ENCODE measurements at regions of chr13 and their contacts with region 1.

Region 1: DNA sequence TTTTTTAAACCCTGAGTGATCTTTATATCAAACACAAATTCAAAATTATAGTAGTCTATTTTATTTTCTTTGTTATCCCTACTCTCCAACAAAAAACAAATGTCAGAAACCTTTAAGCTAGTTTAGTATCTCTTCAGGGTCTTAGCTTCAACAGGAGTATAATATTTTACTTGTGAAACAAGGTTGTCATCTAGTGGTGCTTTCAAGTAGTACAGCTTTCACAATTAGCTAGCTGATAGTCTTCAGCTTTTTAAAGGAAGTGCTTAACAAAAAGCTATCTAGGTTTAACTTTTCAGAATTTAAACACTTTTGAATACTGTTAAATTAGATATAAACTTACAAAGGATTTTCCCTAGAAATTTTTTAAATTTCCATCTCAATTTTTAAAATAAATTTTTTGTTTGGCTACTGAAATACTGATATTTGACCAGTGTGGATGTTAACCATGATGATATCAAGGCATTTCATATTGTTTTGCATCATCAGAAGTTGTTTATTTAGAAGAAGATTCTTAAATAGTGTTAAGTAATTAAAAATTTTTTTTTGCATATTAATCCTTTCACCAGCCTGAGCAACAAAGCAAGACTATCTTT is 34.2 kb downstream of the TDRD3 start:
- DNase-seq: no peak
- H3K4me3 ChIP-seq: no peak overlapping the region
- H3K27ac ChIP-seq: no peak overlapping the region
- H3K4me1 ChIP-seq: peaks cover 0 to 36% (median 6%) of the 10 kb centered on the region in 6 donors
- H3K27me3 ChIP-seq: no peaks in the 10 kb centered on the region
- CTCF ChIP-seq: peak; percentile 61 to 90 (median 80)
- POLR2A ChIP-seq: no peak

Region 2: DNA sequence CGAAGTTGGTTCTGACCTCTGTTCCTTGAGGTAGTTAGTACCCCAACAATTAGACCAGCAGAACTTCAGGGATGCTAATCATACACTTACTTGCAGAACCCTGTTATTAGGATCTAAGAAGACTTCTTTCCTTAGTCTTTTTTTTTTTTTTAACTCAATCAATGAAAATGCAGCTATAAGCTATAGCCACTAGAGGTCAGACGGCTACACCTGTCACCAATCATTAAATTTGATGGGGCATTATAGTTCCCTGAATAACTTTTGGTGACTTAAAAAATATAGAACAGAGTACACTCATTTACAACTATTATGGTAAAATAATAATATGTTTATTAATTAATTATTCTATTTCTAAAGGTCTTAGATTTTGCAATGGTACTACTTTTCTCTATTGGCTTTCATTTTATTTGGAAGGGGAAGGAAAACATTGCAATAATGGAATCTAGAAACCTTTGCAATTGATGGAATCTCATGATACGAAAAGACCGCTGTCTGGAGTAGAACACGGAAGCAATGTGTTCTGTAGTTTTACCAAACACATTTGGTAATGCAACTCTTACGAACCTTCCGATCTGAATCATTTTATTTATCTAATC is 750.7 kb before region 1 on chr13:
- intact Hi-C with region 1: loop called (anchors 10 kb)
- DNase-seq: no peak
- H3K4me3 ChIP-seq: no peak overlapping the region
- H3K27ac ChIP-seq: no peak overlapping the region
- H3K4me1 ChIP-seq: peaks cover 0 to 10% (median 0%) of the 10 kb centered on the region in 6 donors
- H3K27me3 ChIP-seq: no peaks in the 10 kb centered on the region
- CTCF ChIP-seq: peak in 8 of 11 experiments; percentile 12 to 55 (median 48)
- POLR2A ChIP-seq: no peak

Measured in spleen (tissue), 13 donors.